ENCODE measurements at regions of chr1 and their contacts with region 1.

Region 1: DNA sequence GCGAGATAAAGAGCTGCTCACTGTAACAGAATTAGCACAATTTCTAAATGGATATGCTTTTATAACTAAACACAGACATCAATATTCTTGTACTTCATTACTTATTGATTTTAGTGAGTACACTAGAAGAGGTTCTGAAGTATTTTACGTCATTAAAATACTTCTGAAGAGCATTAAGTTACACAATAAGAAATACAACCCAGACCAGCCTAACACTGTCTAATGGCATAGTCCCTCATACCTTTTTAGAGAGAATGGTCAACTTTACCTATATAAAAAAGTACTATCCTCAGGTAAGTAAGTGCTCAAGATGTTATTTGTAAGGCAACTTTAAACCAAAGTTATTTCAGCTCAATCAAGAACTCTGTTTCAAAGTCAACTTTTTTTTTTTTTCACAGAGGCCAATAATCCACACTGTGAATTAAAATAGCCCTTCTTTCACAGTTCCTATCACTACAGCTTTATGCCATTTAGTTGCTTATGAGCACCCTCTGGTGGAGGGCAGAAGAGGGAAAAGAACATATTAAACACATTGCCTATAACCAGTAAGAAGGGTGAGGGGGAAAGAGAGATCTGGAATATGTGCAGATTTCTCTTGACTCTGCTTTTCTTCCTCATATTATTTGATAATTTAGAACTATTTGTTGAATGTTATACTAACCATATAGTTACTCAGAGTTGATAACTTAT is 182.1 kb upstream of the DMRTA2 start:
- DNase-seq: peak; percentile 64

Region 2: GRCh38 chr1:50368179-50369012 is 236.9 kb before region 1 on chr1:
- in situ Hi-C with region 1: loop called (anchors 25 kb)
- DNase-seq: peak; percentile 60